ENCODE measurements at regions of chr2 and their contacts with region 1.

Region 1: GRCh38 chr2:157890969-157891639 is 15.0 kb upstream of the ACVR1 start:
- DNase-seq: no peak
- H3K4me3 ChIP-seq: no peak overlapping the region
- H3K27ac ChIP-seq: no peak overlapping the region
- H3K4me1 ChIP-seq: peaks cover 0 to 6% (median 3%) of the 10 kb centered on the region in 4 experiments
- H3K27me3 ChIP-seq: no peaks in the 10 kb centered on the region

Region 2: GRCh38 chr2:157789933-157790511 is 101.1 kb before region 1 on chr2:
- CTCF ChIA-PET with region 1: no interaction called
- POLR2A ChIA-PET with region 1: no interaction called
- DNase-seq: peak; percentile 11 to 56 (median 48)
- H3K4me3 ChIP-seq: no peak overlapping the region
- H3K27ac ChIP-seq: no peak overlapping the region
- H3K4me1 ChIP-seq: peaks cover 0 to 21% (median 6%) of the 10 kb centered on the region in 4 experiments
- H3K27me3 ChIP-seq: no peaks in the 10 kb centered on the region

Region 3: DNA sequence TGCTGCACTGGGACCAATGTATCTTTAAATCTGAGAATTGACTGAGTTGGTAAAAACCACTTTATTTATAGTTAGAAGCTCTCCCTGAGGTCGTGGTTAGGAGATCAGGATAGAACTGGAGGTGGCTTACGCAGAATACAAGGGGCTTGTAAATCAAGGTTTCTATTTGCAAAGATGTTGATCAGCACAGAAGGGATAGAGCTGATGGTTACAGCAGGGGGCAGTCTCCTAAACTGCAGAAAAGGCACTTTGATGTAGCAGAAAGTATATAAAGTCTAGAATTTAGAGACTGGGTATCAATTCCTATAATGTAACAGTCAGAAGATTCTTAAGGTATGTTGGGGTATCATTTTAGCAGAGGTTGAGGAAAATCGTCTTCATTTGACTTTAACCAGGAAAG is 10.2 kb after region 1 on chr2:
- CTCF ChIA-PET with region 1: interaction called, 10 read pairs
- POLR2A ChIA-PET with region 1: no interaction called
- DNase-seq: peak in 2 of 3 donors; percentile 48 to 54
- H3K4me3 ChIP-seq: no peak overlapping the region
- H3K27ac ChIP-seq: no peak overlapping the region
- H3K4me1 ChIP-seq: peaks cover 8 to 23% (median 10%) of the 10 kb centered on the region in 4 experiments
- H3K27me3 ChIP-seq: no peaks in the 10 kb centered on the region